Breast epithelium (tissue), 4 donors: ENCODE measurements at regions of chr15 and their contacts with region 1.

Region 1: GRCh38 chr15:93126599-93126998 is 37.6 kb upstream of the RGMA start:
- DNase-seq: no peak
- H3K4me3 ChIP-seq: no peak overlapping the region
- H3K27ac ChIP-seq: no peak overlapping the region
- H3K4me1 ChIP-seq: no peaks in the 10 kb centered on the region
- H3K27me3 ChIP-seq: no peaks in the 10 kb centered on the region
- CTCF ChIP-seq: no peak
- POLR2A ChIP-seq: no peak

Region 2: DNA sequence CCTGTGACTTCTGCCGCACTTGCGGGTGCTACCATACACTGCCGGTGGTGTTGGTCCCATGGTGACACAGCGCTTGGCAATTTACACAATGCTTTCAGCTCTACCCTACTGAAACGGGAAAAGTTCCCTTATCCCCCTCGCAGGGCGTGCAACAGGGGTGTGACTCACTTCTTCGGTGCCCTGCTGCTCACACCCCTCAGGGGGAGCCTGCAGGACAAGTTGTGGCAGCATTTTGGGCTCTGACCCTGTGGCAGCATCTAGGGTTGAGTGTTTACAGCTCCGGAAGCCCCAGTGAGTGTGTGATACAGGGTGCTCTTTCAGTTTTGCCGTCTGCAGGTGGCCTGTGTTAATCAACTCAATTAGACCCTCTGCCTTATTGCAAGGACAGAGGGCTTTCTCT is 287.1 kb after region 1 on chr15:
- intact Hi-C with region 1: loop called (anchors 5 kb)
- DNase-seq: no peak
- H3K4me3 ChIP-seq: no peak overlapping the region
- H3K27ac ChIP-seq: no peak overlapping the region
- H3K4me1 ChIP-seq: no peaks in the 10 kb centered on the region
- H3K27me3 ChIP-seq: no peaks in the 10 kb centered on the region
- CTCF ChIP-seq: no peak
- POLR2A ChIP-seq: no peak